HepG2 (cell line): ENCODE measurements at regions of chr3 and their contacts with region 1.

Region 1: GRCh38 chr3:31918179-31919168 is 62.6 kb downstream of the OSBPL10 start:
- DNase-seq: no peak
- ATAC-seq: no peak
- H3K4me3 ChIP-seq: no peak overlapping the region
- H3K27ac ChIP-seq: peak overlapping the region; percentile 58
- H3K4me1 ChIP-seq: peaks cover 71% of the 10 kb centered on the region
- H3K27me3 ChIP-seq: no peaks in the 10 kb centered on the region
- CTCF ChIP-seq: no peak
- EP300 ChIP-seq: no peak
- POLR2A ChIP-seq: no peak
- RAD21 ChIP-seq: no peak

Region 2: DNA sequence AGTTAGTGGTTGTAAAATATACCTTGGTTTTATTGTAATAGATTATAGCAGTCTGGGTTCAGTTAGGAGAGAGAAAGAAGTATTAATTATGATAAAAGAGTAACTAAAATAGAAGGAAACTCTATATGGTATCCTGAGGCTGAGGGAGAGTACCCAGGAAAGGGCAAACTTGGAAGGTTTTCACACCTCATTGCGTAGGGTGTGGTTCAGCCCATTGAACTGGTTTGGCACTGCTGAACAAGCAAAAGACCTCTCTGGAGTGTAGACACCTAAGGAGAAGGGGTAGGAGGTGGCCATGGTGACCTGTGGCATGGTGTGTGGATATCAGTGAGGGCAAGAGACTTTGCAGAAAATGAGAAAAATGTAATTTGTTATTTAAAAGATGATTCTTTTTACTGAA is 322.3 kb before region 1 on chr3:
- CTCF ChIA-PET with region 1: no interaction called
- POLR2A ChIA-PET with region 1: no interaction called
- in situ Hi-C with region 1: no loop called
- intact Hi-C with region 1: no loop called
- DNase-seq: no peak
- ATAC-seq: no peak
- H3K4me3 ChIP-seq: no peak overlapping the region
- H3K27ac ChIP-seq: no peak overlapping the region
- H3K4me1 ChIP-seq: peaks cover 18% of the 10 kb centered on the region
- H3K27me3 ChIP-seq: no peaks in the 10 kb centered on the region
- CTCF ChIP-seq: no peak
- EP300 ChIP-seq: no peak
- POLR2A ChIP-seq: no peak
- RAD21 ChIP-seq: no peak

Region 3: DNA sequence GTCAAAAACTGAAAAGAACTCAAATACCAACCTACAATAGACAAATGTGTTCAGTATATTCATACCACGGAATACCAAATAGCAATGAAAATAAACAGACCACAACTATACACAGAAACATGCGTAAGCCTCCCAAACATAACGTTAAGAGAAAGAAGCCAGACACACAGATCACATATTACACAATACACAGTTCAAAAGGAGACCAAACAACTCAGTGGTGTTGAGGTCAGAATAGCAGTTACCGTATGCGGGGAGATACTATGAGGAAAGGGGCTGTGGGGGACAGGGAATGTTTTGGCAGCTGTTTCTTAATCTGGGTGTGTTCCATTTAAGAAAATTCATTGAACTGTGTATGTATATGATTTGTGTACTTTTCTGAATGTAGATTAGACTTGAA is 56.0 kb after region 1 on chr3:
- CTCF ChIA-PET with region 1: no interaction called
- POLR2A ChIA-PET with region 1: no interaction called
- in situ Hi-C with region 1: no loop called
- intact Hi-C with region 1: loop called (anchors 5 kb)
- DNase-seq: peak; percentile 81
- ATAC-seq: peak; percentile 86
- H3K4me3 ChIP-seq: no peak overlapping the region; a peak in 1 of 6 replicates
- H3K27ac ChIP-seq: peak overlapping the region; percentile 29
- H3K4me1 ChIP-seq: peaks cover 100% of the 10 kb centered on the region
- H3K27me3 ChIP-seq: no peaks in the 10 kb centered on the region
- CTCF ChIP-seq: no peak
- EP300 ChIP-seq: peak; percentile 53 to 60; a peak in 2 of 4 replicates
- POLR2A ChIP-seq: no peak
- RAD21 ChIP-seq: no peak